ENCODE measurements at regions of chr16 and their contacts with region 1.

Region 1: DNA sequence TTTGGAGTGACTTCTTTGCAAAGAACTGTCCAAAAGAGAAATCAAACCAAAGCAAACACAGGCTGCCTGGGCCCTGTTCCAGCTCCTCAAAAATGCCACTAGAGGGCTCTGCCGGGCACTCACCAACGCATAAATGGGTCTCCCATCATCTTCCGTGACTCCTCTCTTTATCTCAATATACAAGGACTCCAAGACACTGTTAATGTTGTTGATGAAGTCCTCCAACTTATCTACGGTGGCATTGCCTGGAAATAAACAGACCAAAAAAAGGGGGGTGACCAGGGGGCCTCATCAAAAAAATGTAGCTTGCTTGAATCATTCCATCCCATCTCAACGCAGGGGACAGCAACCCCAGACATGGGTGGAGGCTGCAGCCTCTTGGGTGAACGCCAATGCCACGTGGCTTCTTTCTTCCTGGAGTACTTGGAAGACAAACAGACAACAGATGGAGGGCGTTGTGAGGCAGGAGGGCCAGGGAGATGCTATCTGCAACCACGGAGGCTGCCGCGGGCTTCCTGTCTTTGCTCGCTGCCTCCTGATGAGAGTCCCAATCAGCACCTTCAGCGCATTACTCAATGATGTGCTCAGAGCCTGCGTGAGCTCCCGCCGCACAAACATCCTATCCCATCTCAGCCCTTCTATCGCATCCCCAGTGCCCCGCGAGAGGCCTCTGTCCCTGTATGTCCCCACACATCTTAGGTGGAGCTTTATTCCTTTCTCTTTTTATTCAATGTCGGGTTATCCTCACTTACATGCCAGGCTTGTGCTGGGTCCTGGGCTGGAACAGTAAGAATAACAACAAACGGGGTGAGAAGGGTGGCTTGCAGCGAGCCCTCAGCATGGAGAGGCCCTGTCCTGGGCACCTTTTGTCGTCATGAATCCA is 32.0 kb downstream of the KDM8 start:
- DNase-seq: no peak
- H3K4me3 ChIP-seq: no peak overlapping the region
- H3K27ac ChIP-seq: peak overlapping the region; percentile 75
- H3K27me3 ChIP-seq: no peaks in the 10 kb centered on the region
- CTCF ChIP-seq: peak; percentile 94

Region 2: GRCh38 chr16:26857371-26857770 is 377.9 kb before region 1 on chr16:
- CTCF ChIA-PET with region 1: no interaction called
- POLR2A ChIA-PET with region 1: no interaction called
- DNase-seq: no peak
- H3K4me3 ChIP-seq: no peak overlapping the region
- H3K27ac ChIP-seq: no peak overlapping the region
- H3K27me3 ChIP-seq: no peaks in the 10 kb centered on the region
- CTCF ChIP-seq: no peak

Region 3: DNA sequence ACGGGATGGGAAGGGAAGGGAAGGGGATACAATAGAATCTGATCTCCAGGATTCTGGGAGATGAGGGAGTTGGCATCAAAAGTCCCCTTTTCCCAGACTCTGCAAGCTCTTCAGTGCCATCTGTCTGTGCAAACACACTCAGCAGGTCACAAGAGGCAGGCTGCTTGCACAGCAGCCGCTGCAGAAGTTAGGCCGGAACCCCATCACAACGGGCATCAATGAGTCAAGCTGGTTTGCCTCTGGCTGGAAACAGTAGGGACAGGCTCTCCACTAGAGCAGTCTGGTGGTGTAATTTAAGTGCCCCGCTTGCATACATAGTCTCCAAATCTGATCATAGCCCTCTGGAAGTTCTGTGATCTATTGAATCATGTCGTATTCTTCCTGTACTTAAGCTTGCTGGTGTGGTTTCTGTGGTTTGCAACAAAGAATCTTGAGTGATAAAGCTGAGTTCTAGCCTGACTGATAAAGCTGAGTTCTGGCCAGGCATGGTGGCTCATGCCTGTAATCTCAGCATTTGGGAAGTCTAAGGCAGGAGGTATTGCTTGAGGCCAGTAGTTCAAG is 65.7 kb before region 1 on chr16:
- CTCF ChIA-PET with region 1: no interaction called
- POLR2A ChIA-PET with region 1: no interaction called
- DNase-seq: peak; percentile 53
- H3K4me3 ChIP-seq: no peak overlapping the region
- H3K27ac ChIP-seq: no peak overlapping the region
- H3K27me3 ChIP-seq: no peaks in the 10 kb centered on the region
- CTCF ChIP-seq: peak; percentile 33

Region 4: DNA sequence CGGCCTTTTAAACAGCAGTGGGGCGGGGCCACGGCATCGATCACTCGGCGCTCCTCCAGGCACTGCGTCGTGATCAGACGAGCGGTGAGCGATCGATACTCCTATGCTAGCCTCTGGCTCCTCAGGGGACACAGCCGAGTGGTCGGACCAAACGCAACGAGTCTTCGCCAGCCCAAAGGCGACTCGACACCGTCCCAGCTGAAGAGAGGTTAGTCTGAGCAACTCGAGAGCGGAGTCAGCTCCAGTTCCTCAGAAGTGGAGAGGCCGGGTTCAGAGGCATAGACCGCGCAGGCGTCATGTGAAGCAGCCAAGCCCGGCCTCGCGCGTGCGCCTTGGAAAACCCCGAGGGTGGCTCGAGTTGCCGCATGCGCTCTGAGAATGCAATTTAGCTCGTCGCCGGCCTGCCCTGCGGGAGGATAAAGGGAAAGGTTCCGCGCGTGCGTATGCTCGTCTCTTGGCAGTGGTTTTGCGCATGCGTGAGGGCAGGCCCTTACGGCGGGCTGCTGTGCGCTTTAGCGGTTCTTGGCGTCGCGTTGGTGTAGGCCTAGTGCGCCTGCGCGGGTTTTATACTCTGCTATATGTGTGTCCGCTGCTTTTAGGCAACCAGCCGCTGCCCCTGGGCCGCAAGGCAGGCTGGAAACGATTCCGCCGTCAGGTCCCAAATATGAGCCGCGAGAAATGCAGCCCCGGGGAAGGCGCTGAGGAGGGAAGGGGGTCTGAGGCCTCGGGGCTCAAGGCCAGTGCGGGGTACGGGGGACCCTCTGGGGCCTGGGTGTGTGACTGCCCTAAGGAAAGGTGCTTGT is 31.7 kb before region 1 on chr16 and contains the start of gene KDM8:
- CTCF ChIA-PET with region 1: interaction called, 16 read pairs
- POLR2A ChIA-PET with region 1: interaction called, 5 read pairs
- DNase-seq: peak; percentile 99
- H3K4me3 ChIP-seq: peak within 1 kb of the TSS; percentile 93
- H3K27ac ChIP-seq: peak within 1 kb of the TSS; percentile 98
- H3K27me3 ChIP-seq: no peaks in the 10 kb centered on the region
- CTCF ChIP-seq: no peak
- polyA plus RNA-seq, gene KDM8: 2.5 and 2.8 TPM in 2 replicates

Region 5: GRCh38 chr16:27253526-27253930 is 18.2 kb after region 1 on chr16:
- CTCF ChIA-PET with region 1: interaction called, 23 read pairs
- POLR2A ChIA-PET with region 1: no interaction called
- DNase-seq: peak; percentile 51
- H3K4me3 ChIP-seq: no peak overlapping the region
- H3K27ac ChIP-seq: peak overlapping the region; percentile 90
- H3K27me3 ChIP-seq: no peaks in the 10 kb centered on the region
- CTCF ChIP-seq: no peak

Region 6: DNA sequence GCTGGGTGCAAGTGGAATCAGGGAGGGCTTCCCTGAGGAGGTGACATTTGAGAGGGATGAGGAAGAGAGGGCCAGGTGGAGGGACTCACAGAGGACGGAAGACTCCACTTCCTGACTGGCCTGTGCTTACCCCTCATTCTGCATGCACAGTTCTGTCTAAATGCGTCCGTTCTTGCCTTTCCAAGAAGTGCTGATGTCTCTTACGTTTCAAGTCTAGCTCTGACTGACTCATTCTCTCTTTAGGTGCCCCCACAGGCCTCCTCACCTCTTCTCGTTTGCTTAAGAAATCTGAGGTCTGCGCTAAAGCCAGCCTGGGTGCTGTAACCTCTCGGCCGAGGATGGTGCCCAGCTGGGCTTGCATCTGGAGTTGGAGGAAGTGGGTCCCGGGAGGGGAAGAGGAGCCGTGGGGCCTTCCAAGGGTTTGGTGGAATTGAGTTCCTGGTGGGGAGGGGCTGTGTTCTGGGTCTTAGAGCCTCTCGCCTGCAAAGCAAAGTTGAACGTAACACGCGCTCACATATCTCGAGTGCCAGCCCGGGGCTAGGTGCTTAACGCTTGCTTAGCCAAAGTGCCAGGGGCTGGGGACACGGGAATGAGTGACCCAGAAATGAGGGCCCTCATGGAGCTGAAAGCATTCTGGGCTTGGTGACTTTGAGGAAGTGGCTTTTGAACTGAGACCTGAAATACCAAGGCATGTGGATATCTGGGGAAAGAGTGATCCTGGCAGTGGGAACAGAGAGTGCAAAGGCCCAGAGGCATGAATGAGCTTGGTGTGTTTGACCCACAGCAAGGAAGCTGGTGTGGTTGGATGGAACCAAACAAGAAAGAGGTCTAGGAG is 83.3 kb after region 1 on chr16:
- CTCF ChIA-PET with region 1: interaction called, 21 read pairs
- POLR2A ChIA-PET with region 1: interaction called, 15 read pairs
- DNase-seq: no peak
- H3K4me3 ChIP-seq: no peak overlapping the region
- H3K27ac ChIP-seq: peak overlapping the region; percentile 55
- H3K27me3 ChIP-seq: no peaks in the 10 kb centered on the region
- CTCF ChIP-seq: no peak

Region 7: DNA sequence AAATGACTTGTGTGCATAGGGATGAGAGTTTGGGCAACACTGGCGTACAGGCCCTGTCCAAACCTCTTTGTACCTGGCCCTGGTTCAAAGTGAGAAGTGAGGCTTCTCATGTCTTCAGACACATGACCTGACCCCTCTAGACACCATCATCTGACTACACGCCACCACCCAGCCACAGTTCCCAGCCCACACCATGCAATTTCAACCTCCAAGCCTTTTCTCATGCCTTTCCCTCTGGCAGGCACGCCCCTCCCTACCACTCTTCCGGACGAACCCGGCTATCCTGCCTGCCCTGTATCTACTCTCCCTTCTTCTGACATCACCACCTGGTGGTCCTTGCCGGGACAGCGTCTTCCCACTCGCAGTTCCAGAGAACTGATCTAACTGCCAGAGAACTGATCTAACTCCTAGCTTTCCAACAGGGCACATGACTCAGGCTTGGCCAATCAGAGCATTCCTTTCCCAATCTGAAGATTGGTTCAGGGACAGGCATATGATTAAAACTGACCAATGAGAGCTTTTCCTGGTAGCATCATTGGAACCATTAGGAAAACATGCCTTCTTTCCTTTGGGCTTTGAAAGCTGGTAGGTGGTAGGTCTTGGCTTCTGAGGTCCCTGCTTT is 139.6 kb after region 1 on chr16:
- CTCF ChIA-PET with region 1: interaction called, 104 read pairs
- POLR2A ChIA-PET with region 1: no interaction called
- DNase-seq: peak; percentile 55
- H3K4me3 ChIP-seq: no peak overlapping the region
- H3K27ac ChIP-seq: peak overlapping the region; percentile 31
- H3K27me3 ChIP-seq: peaks cover 8% of the 10 kb centered on the region
- CTCF ChIP-seq: peak; percentile 66

Region 8: GRCh38 chr16:27455700-27456099 is 220.4 kb after region 1 on chr16:
- CTCF ChIA-PET with region 1: interaction called, 12 read pairs
- POLR2A ChIA-PET with region 1: no interaction called
- DNase-seq: no peak
- H3K4me3 ChIP-seq: no peak overlapping the region
- H3K27ac ChIP-seq: no peak overlapping the region
- H3K27me3 ChIP-seq: no peaks in the 10 kb centered on the region
- CTCF ChIP-seq: no peak